Endothelial cell of umbilical vein (primary cell): ENCODE measurements at regions of chr18 and their contacts with region 1.

Region 1: DNA sequence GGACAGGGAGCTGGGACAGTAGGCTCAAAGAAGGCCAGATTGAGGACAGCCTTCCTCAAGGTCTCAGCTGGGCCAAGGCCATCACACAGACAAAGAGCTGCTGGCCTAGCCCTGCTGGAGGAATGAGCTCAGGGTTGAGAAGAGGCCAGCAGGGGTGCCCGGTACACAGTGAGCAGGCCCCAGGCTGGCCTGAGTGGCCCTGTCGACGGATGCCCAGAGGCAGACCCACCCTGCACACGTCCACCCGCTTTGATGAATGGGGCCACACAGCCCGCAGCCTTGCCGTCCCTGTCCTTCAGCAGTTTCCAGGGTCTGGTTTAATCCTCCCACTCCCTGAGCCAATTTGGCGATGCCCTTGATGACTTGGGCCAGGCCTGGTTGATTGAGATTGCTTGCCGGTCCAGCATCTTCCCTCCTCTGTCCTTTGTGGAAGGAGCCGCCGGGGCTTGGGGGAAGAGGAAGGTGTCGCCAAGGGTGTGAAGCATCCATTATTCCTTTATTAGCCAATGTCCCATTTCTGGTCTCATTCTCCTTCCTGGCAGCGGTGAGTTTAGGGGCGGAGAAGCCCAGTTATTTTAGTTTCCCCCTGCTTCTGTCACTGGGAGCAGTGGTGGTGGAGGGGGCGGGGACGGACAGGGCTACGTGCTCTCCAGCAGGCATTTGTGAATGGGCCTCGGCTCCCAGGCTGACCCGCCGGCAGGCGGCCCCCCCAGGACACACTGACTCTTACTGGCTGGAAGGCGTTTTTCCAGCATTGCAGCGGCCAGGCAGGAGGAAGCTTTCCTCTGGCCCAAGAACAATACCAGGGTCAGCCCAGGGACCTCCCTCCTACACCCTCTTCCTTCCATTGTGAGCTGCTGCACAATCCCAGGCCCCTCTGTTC is 141.7 kb downstream of the CTIF start:
- DNase-seq: peak; percentile 96
- H3K4me3 ChIP-seq: no peak overlapping the region
- H3K27ac ChIP-seq: peak overlapping the region; percentile 42
- H3K4me1 ChIP-seq: peaks cover 17% of the 10 kb centered on the region
- H3K27me3 ChIP-seq: no peaks in the 10 kb centered on the region
- CTCF ChIP-seq: peak; percentile 26 to 67
- POLR2A ChIP-seq: no peak

Region 2: DNA sequence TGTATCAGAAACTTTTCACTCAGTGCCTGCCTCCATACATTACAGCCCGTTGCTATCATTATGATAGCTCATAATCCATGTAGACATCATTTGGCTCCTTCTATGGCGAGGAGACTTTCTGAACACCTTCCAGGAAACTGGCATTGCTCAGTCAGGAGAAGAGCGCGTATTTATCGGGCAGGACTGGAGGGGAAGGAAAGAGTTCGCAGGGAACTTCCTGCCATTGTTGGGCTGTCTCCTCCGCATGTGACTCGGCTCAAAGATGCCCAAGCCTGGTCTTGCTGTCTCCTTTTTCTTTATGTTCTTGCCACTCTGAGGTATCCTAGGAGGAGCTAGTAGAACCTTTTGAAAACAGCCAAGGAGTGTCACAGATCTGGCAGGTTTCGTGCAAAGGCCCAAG is 15.1 kb after region 1 on chr18:
- CTCF ChIA-PET with region 1: interaction called, 7 read pairs
- POLR2A ChIA-PET with region 1: no interaction called
- dilution Hi-C with region 1: no loop called
- intact Hi-C with region 1: loop called (anchors 1 kb)
- DNase-seq: peak; percentile 52
- H3K4me3 ChIP-seq: no peak overlapping the region
- H3K27ac ChIP-seq: peak overlapping the region; percentile 22
- H3K4me1 ChIP-seq: peaks cover 22% of the 10 kb centered on the region
- H3K27me3 ChIP-seq: no peaks in the 10 kb centered on the region
- CTCF ChIP-seq: no peak
- POLR2A ChIP-seq: no peak

Region 3: GRCh38 chr18:48754993-48755473 is 74.5 kb after region 1 on chr18:
- CTCF ChIA-PET with region 1: interaction called, 4 read pairs
- POLR2A ChIA-PET with region 1: no interaction called
- dilution Hi-C with region 1: no loop called
- intact Hi-C with region 1: loop called (anchors 5 kb)
- DNase-seq: no peak
- H3K4me3 ChIP-seq: no peak overlapping the region
- H3K27ac ChIP-seq: no peak overlapping the region
- H3K4me1 ChIP-seq: peaks cover 5% of the 10 kb centered on the region
- H3K27me3 ChIP-seq: no peaks in the 10 kb centered on the region
- CTCF ChIP-seq: no peak
- POLR2A ChIP-seq: no peak

Region 4: GRCh38 chr18:48842259-48843061 is 161.9 kb after region 1 on chr18:
- CTCF ChIA-PET with region 1: interaction called, 3 read pairs
- POLR2A ChIA-PET with region 1: no interaction called
- dilution Hi-C with region 1: no loop called
- intact Hi-C with region 1: loop called (anchors 2 kb)
- DNase-seq: peak; percentile 95
- H3K4me3 ChIP-seq: no peak overlapping the region
- H3K27ac ChIP-seq: peak overlapping the region; percentile 74
- H3K4me1 ChIP-seq: peaks cover 60% of the 10 kb centered on the region
- H3K27me3 ChIP-seq: no peaks in the 10 kb centered on the region
- CTCF ChIP-seq: no peak
- POLR2A ChIP-seq: no peak

Region 5: GRCh38 chr18:48913201-48913600 is 232.6 kb after region 1 on chr18:
- CTCF ChIA-PET with region 1: no interaction called
- POLR2A ChIA-PET with region 1: no interaction called
- dilution Hi-C with region 1: no loop called
- intact Hi-C with region 1: no loop called
- DNase-seq: no peak
- H3K4me3 ChIP-seq: no peak overlapping the region
- H3K27ac ChIP-seq: no peak overlapping the region
- H3K4me1 ChIP-seq: no peaks in the 10 kb centered on the region
- H3K27me3 ChIP-seq: no peaks in the 10 kb centered on the region
- CTCF ChIP-seq: no peak
- POLR2A ChIP-seq: no peak

Region 6: DNA sequence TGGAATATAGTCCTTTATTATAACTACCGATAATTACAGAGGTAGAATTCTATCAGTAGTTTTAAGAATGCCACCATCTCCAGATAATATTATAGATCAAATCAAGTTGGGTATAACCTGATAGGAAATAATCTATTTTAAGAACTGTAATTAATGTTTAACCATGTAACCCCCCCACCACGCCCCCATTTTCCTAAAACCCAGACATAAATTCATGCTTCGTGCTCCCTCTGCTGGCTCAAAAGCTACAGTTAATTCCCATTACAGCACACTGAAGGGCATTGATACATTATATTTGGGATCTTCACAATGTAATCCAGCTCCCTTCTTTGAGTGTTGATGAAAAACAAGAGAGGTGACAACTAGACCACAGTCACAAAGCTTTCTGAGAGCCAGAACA is 498.2 kb after region 1 on chr18:
- CTCF ChIA-PET with region 1: interaction called, 16 read pairs
- POLR2A ChIA-PET with region 1: no interaction called
- dilution Hi-C with region 1: no loop called
- intact Hi-C with region 1: loop called (anchors 1 kb)
- DNase-seq: peak; percentile 37
- H3K4me3 ChIP-seq: no peak overlapping the region
- H3K27ac ChIP-seq: no peak overlapping the region
- H3K4me1 ChIP-seq: peaks cover 18% of the 10 kb centered on the region
- H3K27me3 ChIP-seq: no peaks in the 10 kb centered on the region
- CTCF ChIP-seq: peak; percentile 44 to 48
- POLR2A ChIP-seq: no peak